Activated T-helper 2 cell treated with anti-CD3 and anti-CD28 coated beads, Interferon-gamma antibody, Interleukin-2, Interleukin-4, amounts not matched to agents 10 μg/mL and 5 μg/mL and 100 μg/mL, durations not matched to agents 14 hours and 24 hours and 36 hours (primary cell): ENCODE measurements at regions of chr3 and their contacts with region 1.

Region 1: GRCh38 chr3:120370463-120371129 is 21.4 kb upstream of the LRRC58 start:
- DNase-seq: no peak
- H3K4me3 Mint-ChIP-seq: no peak overlapping the region
- H3K27ac Mint-ChIP-seq: no peak overlapping the region
- H3K4me1 Mint-ChIP-seq: peaks cover 6% of the 10 kb centered on the region
- H3K27me3 Mint-ChIP-seq: peaks cover 50% of the 10 kb centered on the region

Region 2: DNA sequence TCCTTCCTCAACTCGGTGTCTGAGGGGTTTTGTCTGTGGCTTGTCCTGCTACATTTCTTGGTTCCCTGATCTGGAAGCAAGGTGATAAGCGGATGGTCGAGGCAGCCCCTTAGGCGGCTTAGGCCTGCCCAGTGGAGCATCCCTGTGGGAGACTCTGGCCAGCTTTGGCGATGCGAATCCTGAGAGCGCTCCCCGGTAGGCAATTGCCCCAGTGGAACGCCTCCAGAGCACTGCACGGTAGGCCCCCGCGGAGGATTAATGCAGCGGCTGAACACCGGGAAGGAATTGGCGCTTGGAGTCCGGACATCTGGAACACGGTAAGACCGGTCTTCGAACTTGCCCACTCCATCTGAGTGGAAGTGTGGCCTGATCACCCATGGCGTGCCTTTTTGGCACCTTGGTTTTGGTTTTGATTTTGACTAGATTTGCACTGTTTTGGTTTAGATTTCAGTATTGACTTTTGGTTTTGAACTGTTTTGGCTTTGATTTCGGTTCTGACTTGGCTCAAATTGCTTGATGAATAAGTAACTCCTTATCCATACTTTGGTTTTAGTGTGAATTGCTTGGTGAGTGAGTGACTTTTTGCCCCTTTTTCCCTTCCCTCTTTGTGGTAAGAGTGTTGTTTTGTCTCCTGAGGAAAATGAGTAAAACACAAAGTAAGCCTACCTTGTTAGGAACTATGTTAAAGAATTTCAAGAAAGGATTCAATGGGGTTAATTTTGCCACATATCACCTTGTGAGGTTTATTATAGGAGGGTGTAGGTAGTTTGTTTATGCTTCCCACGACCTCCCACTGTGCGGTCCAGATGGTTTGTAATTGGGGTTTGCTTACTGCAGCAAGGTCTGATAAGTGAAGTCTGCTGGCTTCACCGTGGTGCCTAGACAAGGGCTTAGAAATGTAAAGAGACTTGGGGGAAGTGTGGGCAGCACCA is 58.5 kb before region 1 on chr3:
- intact Hi-C with region 1: loop called (anchors 10 kb)
- DNase-seq: no peak
- H3K4me3 Mint-ChIP-seq: no peak overlapping the region
- H3K27ac Mint-ChIP-seq: no peak overlapping the region
- H3K4me1 Mint-ChIP-seq: peaks cover 4% of the 10 kb centered on the region
- H3K27me3 Mint-ChIP-seq: peaks cover 4% of the 10 kb centered on the region

Region 3: DNA sequence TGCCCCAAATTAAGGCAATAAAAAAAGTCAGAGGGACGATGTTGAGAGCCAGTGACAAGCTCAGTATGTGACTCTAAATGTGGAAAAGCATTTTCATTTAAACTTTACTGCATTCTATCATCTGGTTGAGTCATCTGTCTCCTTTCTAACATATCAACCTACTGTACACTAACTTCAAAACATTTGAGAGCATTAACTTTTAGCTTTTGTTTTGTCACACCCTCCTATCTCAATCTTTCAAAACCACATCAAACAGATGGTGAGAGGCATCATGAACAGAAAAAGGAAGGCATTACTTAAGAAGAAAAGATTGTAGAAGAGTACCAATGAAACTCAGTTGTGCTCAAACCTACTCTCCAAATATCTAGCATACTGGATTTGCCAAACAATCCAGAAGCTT is 26.2 kb before region 1 on chr3:
- intact Hi-C with region 1: no loop called
- DNase-seq: no peak
- H3K4me3 Mint-ChIP-seq: peak overlapping the region; percentile 31
- H3K27ac Mint-ChIP-seq: peak overlapping the region; percentile 75
- H3K4me1 Mint-ChIP-seq: peaks cover 42% of the 10 kb centered on the region
- H3K27me3 Mint-ChIP-seq: no peaks in the 10 kb centered on the region

Region 4: GRCh38 chr3:121418182-121418581 is 1047.6 kb after region 1 on chr3:
- intact Hi-C with region 1: no loop called
- DNase-seq: no peak
- H3K4me3 Mint-ChIP-seq: no peak overlapping the region
- H3K27ac Mint-ChIP-seq: no peak overlapping the region
- H3K4me1 Mint-ChIP-seq: no peaks in the 10 kb centered on the region
- H3K27me3 Mint-ChIP-seq: no peaks in the 10 kb centered on the region